H1 (cell line): ENCODE measurements at regions of chr9 and their contacts with region 1.

Region 1: DNA sequence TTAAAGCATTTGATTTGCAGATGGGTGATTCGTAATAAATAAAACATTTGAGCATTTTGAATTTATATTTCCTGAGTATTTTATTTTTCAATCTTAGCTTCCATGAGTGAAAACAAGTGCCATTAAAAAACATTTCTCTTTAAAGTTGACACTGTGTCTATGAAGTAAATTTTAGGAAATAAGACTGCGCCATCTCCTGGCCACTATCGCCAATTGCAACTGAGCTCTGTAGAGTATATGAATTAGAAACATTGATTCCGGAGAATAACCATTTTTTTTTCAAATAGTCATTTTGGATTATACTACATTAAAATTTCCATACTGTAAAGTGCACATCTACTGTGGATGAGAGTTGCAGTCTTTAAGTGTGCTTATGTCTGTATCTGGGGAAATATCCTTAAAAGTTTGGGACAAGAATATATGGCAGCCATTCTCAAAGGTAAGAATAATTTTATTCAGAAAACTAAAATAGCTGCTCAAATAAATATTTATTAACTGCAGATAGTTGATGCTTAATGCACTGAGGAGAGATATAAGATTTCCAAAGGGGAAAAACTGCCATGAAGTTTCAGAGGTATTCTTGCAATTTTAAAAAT is 5.9 kb downstream of the DMRTA1 start:
- DNase-seq: no peak
- H3K4me3 ChIP-seq: no peak overlapping the region
- H3K27ac ChIP-seq: no peak overlapping the region
- H3K4me1 ChIP-seq: peaks cover 0 to 4% (median 1%) of the 10 kb centered on the region in 4 experiments; a peak in 1 of 7 replicates
- H3K27me3 ChIP-seq: peaks cover 0 to 3% (median 0%) of the 10 kb centered on the region in 4 experiments; a peak in 2 of 7 replicates
- CTCF ChIP-seq: peak in 2 of 3 experiments; percentile 57 to 58; a peak in 2 of 4 replicates
- EP300 ChIP-seq: no peak
- POLR2A ChIP-seq: no peak
- RAD21 ChIP-seq: peak; percentile 72 to 77

Region 2: DNA sequence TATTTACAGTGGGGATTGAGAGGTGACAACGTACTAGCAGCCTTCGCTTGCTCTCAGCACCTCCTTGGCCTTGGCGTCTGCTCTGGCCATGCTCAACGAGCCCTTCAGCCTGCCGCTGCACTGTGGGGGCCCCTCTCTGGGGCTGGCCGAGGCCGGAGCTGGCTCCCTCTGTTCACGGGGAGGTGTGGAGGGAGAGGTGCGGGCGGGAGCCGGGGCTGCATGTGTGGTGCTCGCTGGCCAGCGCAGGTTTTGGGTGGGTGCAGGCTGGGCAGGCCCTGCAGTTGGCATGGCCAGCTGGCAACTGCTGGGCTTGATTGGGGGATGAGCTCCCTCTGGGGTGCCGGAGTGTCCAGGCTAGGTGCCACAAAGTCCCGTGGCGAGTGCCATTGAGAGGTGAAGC is 11.7 kb before region 1 on chr9:
- CTCF ChIA-PET with region 1: interaction called, 15 read pairs
- POLR2A ChIA-PET with region 1: no interaction called
- DNase-seq: no peak
- H3K4me3 ChIP-seq: no peak overlapping the region
- H3K27ac ChIP-seq: no peak overlapping the region
- H3K4me1 ChIP-seq: no peaks in the 10 kb centered on the region
- H3K27me3 ChIP-seq: no peaks in the 10 kb centered on the region; a peak in 1 of 7 replicates
- CTCF ChIP-seq: no peak
- EP300 ChIP-seq: no peak
- POLR2A ChIP-seq: no peak
- RAD21 ChIP-seq: no peak